ENCODE measurements at regions of chr18 and their contacts with region 1.

Region 1: DNA sequence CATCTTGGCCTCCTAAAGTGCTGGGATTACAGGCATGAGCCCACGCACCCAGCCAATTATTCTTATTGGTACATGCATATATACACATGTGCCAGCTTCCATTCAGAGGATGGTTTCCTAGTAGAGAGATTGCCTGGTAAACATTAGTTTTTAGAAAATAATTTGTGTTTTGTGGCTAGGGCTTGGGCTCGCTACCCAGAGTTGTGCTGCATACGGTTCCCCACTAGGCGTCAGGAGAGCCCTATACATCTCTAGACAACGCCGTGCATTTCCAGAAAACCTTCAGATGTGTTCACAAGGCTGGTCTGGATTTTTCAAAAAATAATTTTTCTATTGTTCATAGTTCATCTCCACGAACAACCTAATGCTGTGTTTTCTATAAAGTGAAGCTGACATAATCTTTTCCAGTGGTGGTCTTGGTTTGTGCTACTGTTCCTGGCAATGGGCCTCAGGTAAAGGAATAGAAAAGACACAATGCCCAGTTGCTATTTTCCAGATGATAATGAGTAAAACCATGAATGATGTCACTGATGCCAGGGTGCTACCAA is 14.7 kb upstream of the AFG3L2 start:
- DNase-seq: peak; percentile 72
- H3K4me3 Mint-ChIP-seq: no peak overlapping the region
- H3K27ac Mint-ChIP-seq: no peak overlapping the region
- H3K4me1 Mint-ChIP-seq: no peaks in the 10 kb centered on the region
- H3K27me3 Mint-ChIP-seq: peaks cover 4% of the 10 kb centered on the region

Region 2: GRCh38 chr18:12361770-12362378 is 29.8 kb before region 1 on chr18:
- CTCF ChIA-PET with region 1: no interaction called
- intact Hi-C with region 1: no loop called
- DNase-seq: no peak
- H3K4me3 Mint-ChIP-seq: no peak overlapping the region
- H3K27ac Mint-ChIP-seq: no peak overlapping the region
- H3K4me1 Mint-ChIP-seq: no peaks in the 10 kb centered on the region
- H3K27me3 Mint-ChIP-seq: no peaks in the 10 kb centered on the region

Region 3: GRCh38 chr18:12408247-12408869 is 16.7 kb after region 1 on chr18:
- CTCF ChIA-PET with region 1: interaction called, 17 read pairs
- intact Hi-C with region 1: no loop called
- DNase-seq: no peak
- H3K4me3 Mint-ChIP-seq: peak overlapping the region; percentile 72
- H3K27ac Mint-ChIP-seq: no peak overlapping the region
- H3K4me1 Mint-ChIP-seq: peaks cover 13% of the 10 kb centered on the region
- H3K27me3 Mint-ChIP-seq: peaks cover 38% of the 10 kb centered on the region

Region 4: DNA sequence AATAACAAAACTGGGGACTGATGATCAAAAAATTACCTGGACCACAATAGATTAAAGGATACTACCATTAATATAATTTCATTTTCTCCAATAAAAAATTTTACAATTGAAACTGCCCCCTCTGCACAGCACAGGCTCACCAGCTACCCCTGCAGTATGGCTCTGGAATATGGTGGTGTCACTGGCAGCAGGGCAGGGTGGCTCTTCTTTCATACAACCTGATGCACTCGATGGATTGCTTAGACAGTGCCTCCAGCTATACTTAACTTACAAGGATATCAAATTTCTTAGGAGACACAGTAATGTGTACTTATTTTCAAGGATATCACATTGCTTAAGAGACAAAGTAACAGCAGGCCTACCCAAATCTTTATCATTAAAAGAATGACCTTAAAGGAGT is 140.1 kb after region 1 on chr18:
- CTCF ChIA-PET with region 1: interaction called, 6 read pairs
- intact Hi-C with region 1: loop called (anchors 2 kb)
- DNase-seq: no peak
- H3K4me3 Mint-ChIP-seq: no peak overlapping the region
- H3K27ac Mint-ChIP-seq: no peak overlapping the region
- H3K4me1 Mint-ChIP-seq: no peaks in the 10 kb centered on the region
- H3K27me3 Mint-ChIP-seq: peaks cover 2% of the 10 kb centered on the region

Measured in activated naive CD4-positive, alpha-beta T cell treated with anti-CD3 and anti-CD28 coated beads for 36 hours (primary cell).